K562 (cell line): ENCODE measurements at regions of chr19 and their contacts with region 1.

Region 1: GRCh38 chr19:1904385-1905070 is 671 bp upstream of the ADAT3 start:
- DNase-seq: peak in 1 of 4 experiments; percentile 72
- ATAC-seq: peak; percentile 14
- H3K4me3 ChIP-seq: peak overlapping the region; percentile 81
- H3K27ac ChIP-seq: peak overlapping the region; percentile 80
- H3K4me1 ChIP-seq: peaks cover 16 to 46% of the 10 kb centered on the region in 2 experiments; a peak in 4 of 5 replicates
- H3K27me3 ChIP-seq: no peaks in the 10 kb centered on the region
- CTCF ChIP-seq: no peak
- EP300 ChIP-seq: no peak
- POLR2A ChIP-seq: no peak
- RAD21 ChIP-seq: no peak

Region 2: DNA sequence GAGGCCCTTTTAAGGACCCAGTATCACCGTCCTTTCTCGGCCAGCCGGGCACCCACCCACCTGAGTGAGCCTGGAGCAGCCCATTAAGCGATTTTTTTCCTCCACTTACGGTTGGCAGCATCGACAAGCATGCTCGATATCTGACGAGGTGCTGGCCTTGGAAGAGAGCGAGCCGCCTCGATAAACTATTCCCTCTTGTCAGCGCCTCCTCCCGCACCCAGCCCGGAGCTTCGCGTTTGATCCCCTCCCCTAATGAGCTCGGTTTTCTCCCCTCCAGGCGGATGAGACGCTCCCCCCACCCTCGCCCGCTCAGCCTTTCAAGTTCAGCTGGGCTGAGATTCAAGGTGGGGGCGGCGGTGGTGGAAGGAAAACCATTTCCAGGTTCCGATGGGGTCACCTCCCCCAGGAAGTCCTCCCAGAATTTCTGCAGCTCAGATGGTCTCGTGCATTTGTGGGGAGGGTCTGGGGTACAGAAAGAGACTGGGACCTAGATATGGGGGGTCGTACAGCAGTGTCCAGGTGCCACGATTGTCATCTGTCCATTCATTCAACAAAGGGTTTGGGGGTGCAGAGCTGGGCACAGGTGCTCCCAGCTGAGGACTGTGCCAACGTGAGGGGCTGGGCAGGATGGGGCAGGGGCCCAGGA is 170.1 kb before region 1 on chr19:
- CTCF ChIA-PET with region 1: no interaction called
- POLR2A ChIA-PET with region 1: no interaction called
- in situ Hi-C with region 1: no loop called
- intact Hi-C with region 1: no loop called
- DNase-seq: peak in 1 of 4 experiments; percentile 23
- ATAC-seq: no peak
- H3K4me3 ChIP-seq: no peak overlapping the region
- H3K27ac ChIP-seq: no peak overlapping the region
- H3K4me1 ChIP-seq: peaks cover 0 to 21% of the 10 kb centered on the region in 2 experiments; a peak in 2 of 5 replicates
- H3K27me3 ChIP-seq: peaks cover 20 to 57% of the 10 kb centered on the region in 2 experiments; a peak in 4 of 5 replicates
- CTCF ChIP-seq: no peak
- EP300 ChIP-seq: no peak
- POLR2A ChIP-seq: no peak
- RAD21 ChIP-seq: no peak

Region 3: GRCh38 chr19:1863726-1864480 is 40.6 kb before region 1 on chr19:
- CTCF ChIA-PET with region 1: no interaction called
- POLR2A ChIA-PET with region 1: no interaction called
- in situ Hi-C with region 1: no loop called
- intact Hi-C with region 1: loop called (anchors 1 kb)
- DNase-seq: peak; percentile 84 to 95 (median 89)
- ATAC-seq: peak; percentile 72
- H3K4me3 ChIP-seq: peak overlapping the region; percentile 75
- H3K27ac ChIP-seq: peak overlapping the region; percentile 99
- H3K4me1 ChIP-seq: peaks cover 34 to 77% of the 10 kb centered on the region in 2 experiments
- H3K27me3 ChIP-seq: no peaks in the 10 kb centered on the region
- CTCF ChIP-seq: no peak; a peak in 1 of 6 replicates
- EP300 ChIP-seq: no peak
- POLR2A ChIP-seq: peak; percentile 62; the same call in 1 of the 2 replicates
- RAD21 ChIP-seq: no peak

Region 4: DNA sequence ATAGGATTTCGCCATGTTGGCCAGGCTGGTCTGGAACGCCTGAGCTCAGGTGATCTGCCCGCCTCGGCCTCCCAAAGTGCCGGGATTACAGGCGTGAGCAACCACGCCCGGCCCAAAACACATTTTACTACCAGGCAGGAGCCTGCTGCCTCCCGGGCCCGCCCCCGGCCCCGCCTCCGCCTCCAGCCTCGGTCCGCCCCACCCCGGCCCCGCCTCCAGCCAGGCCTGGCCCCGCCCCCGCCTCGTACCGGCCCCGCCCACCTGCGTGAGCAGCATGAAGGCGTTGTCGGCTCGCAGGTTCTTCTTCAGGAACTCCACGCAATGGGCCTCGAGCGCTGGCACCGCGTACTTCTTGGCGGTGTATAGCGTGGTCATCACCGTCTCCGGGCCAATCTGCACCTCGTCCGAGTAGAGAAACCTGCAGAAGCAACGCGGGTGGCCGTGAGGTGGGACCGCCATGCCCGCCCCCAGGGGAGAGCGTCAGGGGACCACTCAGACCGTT is 88.3 kb after region 1 on chr19:
- CTCF ChIA-PET with region 1: no interaction called
- POLR2A ChIA-PET with region 1: no interaction called
- in situ Hi-C with region 1: no loop called
- intact Hi-C with region 1: no loop called
- DNase-seq: peak; percentile 85 to 99 (median 96)
- ATAC-seq: peak; percentile 98
- H3K4me3 ChIP-seq: peak overlapping the region; percentile 27; the same call in 1 of the 2 replicates
- H3K27ac ChIP-seq: no peak overlapping the region
- H3K4me1 ChIP-seq: peaks cover 0 to 37% of the 10 kb centered on the region in 2 experiments; a peak in 3 of 5 replicates
- H3K27me3 ChIP-seq: no peaks in the 10 kb centered on the region
- CTCF ChIP-seq: no peak
- EP300 ChIP-seq: no peak
- POLR2A ChIP-seq: no peak
- RAD21 ChIP-seq: no peak